Left cardiac atrium (tissue), 4 donors: ENCODE measurements at regions of chr11 and their contacts with region 1.

Region 1: DNA sequence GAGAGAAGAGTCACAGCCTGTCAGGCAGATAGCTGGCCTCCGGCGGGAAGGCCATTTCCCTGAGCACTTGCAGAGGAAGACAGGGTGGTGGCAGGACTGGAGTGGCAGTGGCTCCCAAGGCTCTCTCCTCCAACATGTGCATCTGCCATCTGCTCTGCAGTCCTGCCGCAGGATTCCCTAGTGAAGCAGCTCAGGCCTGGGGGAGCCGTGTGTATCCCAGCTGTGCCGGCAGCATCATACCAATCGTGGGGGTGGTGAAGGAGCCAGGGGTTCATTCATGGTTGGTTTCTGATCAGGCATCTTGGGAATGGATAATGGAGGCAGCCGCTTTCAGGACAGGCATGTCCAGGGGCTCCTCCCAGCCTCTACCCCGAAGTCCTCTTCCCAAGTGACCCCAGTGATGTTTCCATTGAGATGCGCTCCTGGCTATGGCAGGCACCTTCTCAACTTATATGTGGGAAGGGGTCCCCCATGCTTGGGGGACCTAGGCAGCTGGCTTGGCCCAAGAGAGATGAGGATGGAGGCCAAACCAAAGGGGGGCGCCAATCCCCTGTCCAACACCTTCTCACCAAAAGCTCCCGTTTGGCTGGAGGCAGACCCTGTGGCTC is 6.1 kb downstream of the TAGLN start:
- DNase-seq: no peak
- ATAC-seq: no peak

Region 2: GRCh38 chr11:117127171-117127901 is 78.0 kb before region 1 on chr11:
- intact Hi-C with region 1: loop called (anchors 2 to 5 kb)
- DNase-seq: no peak
- ATAC-seq: no peak

Region 3: DNA sequence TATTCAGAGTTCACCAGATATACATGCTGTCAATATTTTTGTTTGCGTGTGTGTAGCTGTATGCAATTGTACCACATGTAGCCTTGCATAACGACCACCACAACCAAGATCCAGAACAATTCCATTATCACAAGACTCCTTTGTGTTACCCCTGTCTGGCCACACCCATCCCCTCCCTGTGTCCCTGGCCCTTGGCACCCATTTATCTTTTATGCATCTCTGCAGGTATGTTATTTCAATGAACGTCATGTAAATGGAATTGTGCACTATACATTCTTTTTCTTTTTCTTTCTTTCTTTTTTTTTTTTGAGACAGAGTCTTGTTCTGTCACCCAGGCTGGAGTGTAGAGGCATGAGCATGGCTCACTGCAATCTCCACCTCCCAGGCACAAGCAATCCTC is 70.9 kb before region 1 on chr11:
- intact Hi-C with region 1: loop called (anchors 2 to 5 kb)
- DNase-seq: no peak
- ATAC-seq: no peak